Kidney (tissue), 22 donors: ENCODE measurements at regions of chrX and their contacts with region 1.

Region 1: DNA sequence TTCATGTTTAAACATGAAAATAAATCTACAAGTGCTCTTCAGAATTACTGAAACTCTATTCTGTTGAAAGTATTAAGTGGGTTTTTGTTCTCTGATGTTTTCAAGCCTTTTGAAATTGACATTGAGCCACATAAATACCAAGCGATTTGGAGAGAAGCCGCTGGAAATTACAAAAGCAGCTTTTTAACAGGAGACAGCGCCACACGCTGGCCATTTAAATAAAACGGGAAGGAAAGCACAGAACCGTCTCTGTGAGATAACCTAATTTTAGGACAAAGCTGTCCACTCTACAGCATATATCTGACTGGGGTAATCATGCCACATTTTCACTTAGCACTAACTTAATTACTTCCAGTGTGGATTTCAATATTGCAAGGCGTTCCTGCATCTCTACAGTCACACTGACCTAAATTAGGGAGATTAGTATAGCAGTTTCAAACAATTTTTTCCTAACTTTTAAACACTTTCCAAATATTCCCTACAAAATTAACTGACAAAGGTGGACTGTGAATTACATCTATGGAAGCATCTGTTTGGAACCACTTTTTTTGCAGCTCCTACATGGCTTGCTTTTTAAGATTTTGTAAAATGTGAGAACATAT is 6.8 kb upstream of the ANOS1 start:
- DNase-seq: peak in 3 of 5 donors; percentile 32 to 63 (median 62)
- H3K4me3 ChIP-seq: no peak overlapping the region
- H3K27ac ChIP-seq: no peak overlapping the region
- H3K4me1 ChIP-seq: no peaks in the 10 kb centered on the region
- H3K27me3 ChIP-seq: peaks cover 3% of the 10 kb centered on the region
- CTCF ChIP-seq: peak; percentile 53

Region 2: DNA sequence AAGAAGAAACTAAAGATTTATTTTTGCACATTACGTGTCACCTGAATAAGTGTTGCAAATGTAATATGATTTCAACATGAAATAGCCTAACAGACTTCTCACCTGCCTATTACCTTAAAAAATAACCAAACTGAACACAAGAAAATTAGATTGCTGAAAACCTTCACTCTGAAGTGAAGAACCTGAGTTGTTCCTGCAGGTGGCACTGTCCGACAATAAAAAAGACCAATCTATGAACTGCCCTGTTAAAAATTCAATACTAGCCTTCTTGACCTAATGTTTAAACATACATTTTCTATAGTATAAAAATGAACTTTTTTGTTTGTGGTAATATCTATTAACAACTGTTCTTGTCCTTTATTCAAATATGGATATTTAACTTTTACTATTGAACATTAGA is 742.3 kb before region 1 on chrX:
- intact Hi-C with region 1: loop called (anchors 10 kb)
- DNase-seq: peak in 3 of 5 donors; percentile 41 to 56 (median 53)
- H3K4me3 ChIP-seq: no peak overlapping the region
- H3K27ac ChIP-seq: no peak overlapping the region
- H3K4me1 ChIP-seq: no peaks in the 10 kb centered on the region
- H3K27me3 ChIP-seq: no peaks in the 10 kb centered on the region
- CTCF ChIP-seq: peak; percentile 52